Aorta (tissue), 5 donors: ENCODE measurements at regions of chr15 and their contacts with region 1.

Region 1: DNA sequence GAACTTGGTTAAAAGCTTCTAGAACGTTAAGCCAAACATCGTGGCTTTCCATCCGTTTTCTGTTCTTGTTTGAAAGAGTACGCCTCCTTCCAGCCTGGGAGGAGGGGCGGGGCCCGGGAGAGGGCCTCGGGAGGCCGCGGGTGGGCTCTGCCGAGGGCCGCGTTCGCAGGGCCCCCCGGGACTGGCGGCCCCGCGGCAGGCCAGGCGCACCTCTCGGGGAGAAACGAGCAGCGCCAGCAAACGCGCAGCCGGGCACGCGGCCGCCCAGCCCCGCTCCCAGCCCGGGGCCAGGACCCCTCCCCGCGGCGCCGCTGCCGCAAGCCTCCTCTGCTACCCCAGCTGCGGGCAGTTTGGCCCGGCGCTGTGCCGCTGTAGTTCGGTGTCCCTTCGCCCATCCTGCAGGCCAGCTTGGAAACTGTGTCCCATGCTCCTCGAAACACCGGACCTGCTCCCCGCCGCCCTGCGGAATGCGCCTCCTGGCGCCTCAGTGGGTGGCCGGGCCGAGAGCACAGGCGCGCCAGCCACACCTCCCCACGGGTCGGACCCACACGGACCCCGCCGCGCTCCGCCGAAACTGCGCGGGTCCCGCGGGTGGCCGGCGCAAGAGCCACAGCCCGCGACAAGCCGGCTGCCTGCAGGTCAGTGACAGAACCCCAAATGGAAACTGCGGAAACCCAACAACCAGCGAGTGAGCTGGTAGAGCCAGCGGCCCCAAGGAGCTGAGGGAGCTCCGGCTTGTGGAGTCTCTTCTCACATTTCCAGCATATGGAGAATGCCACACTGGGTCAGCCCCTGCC is 2.2 kb downstream of the OCA2 start:
- DNase-seq: peak in 1 of 2 donors; percentile 83
- ATAC-seq: no peak
- H3K4me3 ChIP-seq: peak overlapping the region; percentile 12 to 38
- H3K27ac ChIP-seq: peak overlapping the region; percentile 48 to 97
- H3K4me1 ChIP-seq: no peaks in the 10 kb centered on the region
- H3K27me3 ChIP-seq: no peaks in the 10 kb centered on the region

Region 2: DNA sequence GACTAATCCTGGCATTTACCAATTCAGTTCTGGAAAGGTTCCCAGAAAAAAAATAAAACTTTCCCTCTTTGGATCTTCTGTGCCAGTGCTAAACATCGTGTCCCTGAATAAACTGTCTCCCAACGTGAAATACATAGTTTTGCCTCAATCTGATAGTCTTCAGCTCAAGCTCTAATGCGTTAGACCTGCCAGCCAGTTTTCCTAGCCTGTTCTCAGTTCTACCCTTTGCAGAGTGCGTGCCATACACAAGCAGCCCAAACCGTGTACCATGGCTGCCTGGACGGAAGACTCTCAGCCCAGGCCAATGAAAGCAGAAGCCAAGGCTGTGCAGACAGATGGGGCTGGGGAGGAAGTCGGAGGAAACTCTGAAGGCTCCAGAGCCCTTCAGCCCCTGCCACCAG is 13.6 kb after region 1 on chr15:
- intact Hi-C with region 1: loop called in 1 of 2 experiments (anchors 2 kb)
- DNase-seq: no peak
- ATAC-seq: peak; percentile 61
- H3K4me3 ChIP-seq: no peak overlapping the region
- H3K27ac ChIP-seq: peak overlapping the region in 1 of 2 donors; percentile 60
- H3K4me1 ChIP-seq: no peaks in the 10 kb centered on the region
- H3K27me3 ChIP-seq: no peaks in the 10 kb centered on the region